Sigmoid colon (tissue), 7 donors: ENCODE measurements at regions of chr6 and their contacts with region 1.

Region 1: DNA sequence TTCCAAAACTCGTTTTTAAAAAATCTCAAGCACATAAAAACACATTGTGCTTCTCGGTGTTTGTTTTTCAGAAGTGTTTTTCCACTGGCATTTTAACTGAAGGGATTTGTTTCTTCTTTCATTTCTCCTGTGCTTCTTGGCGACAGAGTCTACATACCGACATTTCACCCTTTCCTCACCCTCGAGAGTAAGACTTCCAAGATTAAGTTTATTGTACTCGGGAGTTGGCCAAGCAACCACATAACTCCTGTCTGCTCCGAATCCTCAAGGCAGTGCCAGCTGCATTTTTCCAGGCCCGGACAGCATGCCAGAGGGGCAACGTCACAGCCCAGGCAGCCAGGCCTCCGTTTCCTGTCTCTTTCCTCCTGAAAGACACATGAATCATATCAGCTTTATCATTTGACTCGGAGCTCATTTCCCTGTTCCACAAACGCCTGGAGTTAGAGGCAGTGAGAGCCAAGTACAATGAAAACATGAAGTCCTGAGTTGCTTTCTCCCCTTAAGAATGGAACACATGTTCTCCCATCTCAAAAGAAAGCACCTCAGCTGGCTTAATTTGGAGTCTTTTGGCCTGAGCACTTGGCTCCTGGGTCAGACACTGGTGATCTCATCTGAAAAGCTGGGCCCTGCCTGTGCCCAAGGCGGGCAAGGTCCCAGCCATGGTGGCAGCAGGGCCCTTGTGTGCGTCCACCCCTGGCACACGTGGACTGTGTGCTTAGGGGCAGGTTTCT is 23.2 kb upstream of the FAM50B start:
- DNase-seq: peak; percentile 96
- H3K4me3 ChIP-seq: peak overlapping the region in 3 of 4 donors; percentile 12 to 35 (median 25)
- H3K27ac ChIP-seq: peak overlapping the region; percentile 89 to 95 (median 92)
- H3K4me1 ChIP-seq: peaks cover 0 to 39% (median 21%) of the 10 kb centered on the region in 4 donors
- H3K27me3 ChIP-seq: no peaks in the 10 kb centered on the region
- CTCF ChIP-seq: no peak
- EP300 ChIP-seq: peak in 3 of 4 donors; percentile 70 to 84 (median 79)
- POLR2A ChIP-seq: no peak

Region 2: GRCh38 chr6:3585320-3585928 is 240.6 kb before region 1 on chr6:
- intact Hi-C with region 1: no loop called
- DNase-seq: no peak
- H3K4me3 ChIP-seq: no peak overlapping the region
- H3K27ac ChIP-seq: no peak overlapping the region
- H3K4me1 ChIP-seq: no peaks in the 10 kb centered on the region
- H3K27me3 ChIP-seq: no peaks in the 10 kb centered on the region
- CTCF ChIP-seq: no peak
- EP300 ChIP-seq: no peak
- POLR2A ChIP-seq: no peak

Region 3: DNA sequence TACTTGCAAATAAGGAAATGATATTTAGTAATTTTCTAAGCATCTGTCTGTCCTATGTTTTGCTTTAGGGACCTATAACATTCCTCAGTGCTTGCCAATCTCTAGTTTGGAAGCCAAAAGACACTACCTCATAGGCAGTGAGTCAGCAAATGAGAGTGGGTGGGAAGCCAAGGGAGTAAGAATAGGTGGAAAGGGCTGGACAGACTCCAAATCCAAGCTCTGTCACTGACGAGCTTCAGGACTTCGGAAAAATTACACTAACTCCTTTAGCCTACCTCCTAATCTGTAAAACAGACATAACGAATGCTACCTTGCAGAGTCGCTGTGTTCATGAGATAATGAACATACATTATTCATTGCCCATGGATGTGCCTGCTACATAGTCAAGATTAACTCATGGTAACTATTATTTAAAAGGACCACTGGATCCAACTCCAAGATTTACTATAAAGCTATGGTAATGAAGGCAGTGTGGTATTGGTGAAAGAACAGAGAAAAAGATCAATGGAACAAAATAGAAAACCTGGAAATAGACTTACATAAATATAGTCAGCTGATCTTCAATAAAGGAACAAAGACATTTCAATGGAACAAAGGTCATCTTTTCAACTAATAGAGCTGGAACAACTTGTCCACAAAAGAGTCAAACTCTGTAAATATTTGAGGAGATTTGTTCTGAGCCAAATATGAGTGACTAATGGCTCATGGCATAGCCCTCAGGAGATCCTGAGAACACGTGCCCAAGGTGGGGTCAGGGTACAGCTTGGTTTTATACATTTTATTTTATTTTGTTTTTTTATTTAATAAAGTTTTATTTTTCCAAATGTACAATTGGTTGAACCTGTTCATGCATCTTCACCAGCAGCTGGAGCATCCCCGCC is 87.3 kb after region 1 on chr6:
- intact Hi-C with region 1: loop called (anchors 5 kb)
- DNase-seq: peak; percentile 92
- H3K4me3 ChIP-seq: no peak overlapping the region
- H3K27ac ChIP-seq: peak overlapping the region; percentile 81 to 92 (median 86)
- H3K4me1 ChIP-seq: peaks cover 0 to 57% (median 36%) of the 10 kb centered on the region in 4 donors
- H3K27me3 ChIP-seq: no peaks in the 10 kb centered on the region
- CTCF ChIP-seq: no peak
- EP300 ChIP-seq: peak; percentile 6 to 88 (median 60)
- POLR2A ChIP-seq: no peak